A673 (cell line): ENCODE measurements at regions of chr11 and their contacts with region 1.

Region 1: DNA sequence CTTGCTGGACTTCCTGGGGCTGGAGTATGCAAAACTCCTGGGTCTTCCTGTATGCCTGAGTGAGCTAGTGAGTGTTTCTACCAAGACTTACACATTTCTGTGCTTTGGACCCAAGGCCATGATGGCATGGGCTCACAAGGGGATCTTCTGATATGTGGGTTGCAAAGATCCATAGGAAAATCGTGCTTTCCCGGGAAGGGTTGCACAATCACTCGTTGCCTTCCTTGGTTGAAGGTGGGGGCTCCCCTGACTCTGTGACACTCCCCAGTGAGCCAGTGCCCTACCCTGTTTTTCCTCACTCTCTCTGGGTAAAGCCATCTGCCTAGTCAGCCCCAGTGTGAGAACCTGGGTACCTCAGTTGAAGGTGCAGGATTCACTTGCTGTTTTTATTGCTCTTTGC is 114.0 kb upstream of the CCDC179 start:
- DNase-seq: no peak
- H3K4me3 ChIP-seq: no peak overlapping the region
- H3K27ac ChIP-seq: no peak overlapping the region
- H3K4me1 ChIP-seq: no peaks in the 10 kb centered on the region
- H3K27me3 ChIP-seq: no peaks in the 10 kb centered on the region
- CTCF ChIP-seq: no peak

Region 2: GRCh38 chr11:23840872-23841271 is 866.6 kb after region 1 on chr11:
- CTCF ChIA-PET with region 1: no interaction called
- POLR2A ChIA-PET with region 1: no interaction called
- intact Hi-C with region 1: loop called (anchors 5 kb)
- DNase-seq: no peak
- H3K4me3 ChIP-seq: no peak overlapping the region
- H3K27ac ChIP-seq: no peak overlapping the region
- H3K4me1 ChIP-seq: no peaks in the 10 kb centered on the region
- H3K27me3 ChIP-seq: no peaks in the 10 kb centered on the region
- CTCF ChIP-seq: no peak

Region 3: GRCh38 chr11:24145411-24145810 is 1171.2 kb after region 1 on chr11:
- CTCF ChIA-PET with region 1: no interaction called
- POLR2A ChIA-PET with region 1: no interaction called
- intact Hi-C with region 1: no loop called
- DNase-seq: no peak
- H3K4me3 ChIP-seq: no peak overlapping the region
- H3K27ac ChIP-seq: no peak overlapping the region
- H3K4me1 ChIP-seq: no peaks in the 10 kb centered on the region
- H3K27me3 ChIP-seq: no peaks in the 10 kb centered on the region
- CTCF ChIP-seq: no peak